Adrenal gland (tissue), 19 donors: ENCODE measurements at regions of chr22 and their contacts with region 1.

Region 1: DNA sequence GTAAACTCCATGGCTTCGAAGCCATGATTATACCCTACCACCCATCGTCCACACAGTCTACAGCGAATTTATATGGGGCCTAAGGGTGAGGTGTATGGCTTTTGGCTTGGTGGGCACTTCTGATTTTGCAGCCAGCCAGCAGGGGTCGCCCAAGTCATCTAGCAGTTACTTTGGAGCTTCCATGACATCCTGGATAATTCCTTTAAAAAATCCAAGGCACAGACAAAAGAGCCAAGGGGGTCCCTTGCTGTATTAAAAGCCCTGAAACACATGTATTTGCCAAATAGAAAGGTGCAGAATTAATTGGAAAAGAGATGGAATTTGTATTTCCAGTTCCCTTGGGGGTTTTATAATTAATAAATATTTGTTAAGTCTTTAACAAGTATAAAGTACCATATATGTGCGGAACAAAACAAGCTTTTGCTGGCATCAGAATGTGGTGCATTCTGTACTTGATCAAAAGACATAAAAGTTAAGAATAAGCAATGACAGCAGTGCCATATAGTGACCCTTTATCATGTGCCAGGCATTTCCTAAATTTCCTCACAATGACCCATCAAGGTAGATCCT is 132.8 kb upstream of the PITPNB start:
- DNase-seq: peak; percentile 50 to 89 (median 74)
- H3K4me3 ChIP-seq: no peak overlapping the region
- H3K27ac ChIP-seq: no peak overlapping the region
- H3K4me1 ChIP-seq: no peaks in the 10 kb centered on the region
- H3K27me3 ChIP-seq: no peaks in the 10 kb centered on the region
- CTCF ChIP-seq: peak; percentile 73 to 87 (median 80)
- POLR2A ChIP-seq: no peak

Region 2: DNA sequence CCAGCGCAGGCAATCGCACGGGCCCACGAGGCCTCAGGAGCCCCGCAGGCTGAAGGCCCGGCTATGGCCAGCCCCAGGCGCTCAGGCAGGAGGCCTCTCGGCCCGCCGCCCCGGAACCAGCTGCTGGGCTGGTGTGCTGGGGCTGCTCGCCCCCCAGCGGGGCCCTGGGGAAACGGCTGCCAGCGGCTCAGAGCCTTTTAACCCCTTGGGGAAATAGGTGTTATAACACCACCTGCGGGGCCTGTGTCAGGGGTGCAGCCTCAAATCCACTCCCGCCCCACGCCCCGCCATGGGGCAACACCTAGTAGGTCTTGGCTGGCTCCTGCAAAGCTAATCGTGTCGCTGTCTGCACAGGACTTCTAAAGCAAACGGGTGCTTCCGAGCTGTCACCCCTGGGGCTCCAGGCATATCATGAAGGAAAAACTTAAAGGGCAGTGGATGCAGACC is 390.4 kb after region 1 on chr22:
- intact Hi-C with region 1: loop called in 1 of 2 experiments (anchors 10 kb)
- DNase-seq: peak; percentile 77 to 88 (median 80)
- H3K4me3 ChIP-seq: peak overlapping the region; percentile 4 to 71 (median 54)
- H3K27ac ChIP-seq: peak overlapping the region; percentile 9 to 84 (median 59)
- H3K4me1 ChIP-seq: peaks cover 17 to 19% of the 10 kb centered on the region in 2 donors
- H3K27me3 ChIP-seq: no peaks in the 10 kb centered on the region
- CTCF ChIP-seq: peak; percentile 54 to 80 (median 71)
- POLR2A ChIP-seq: peak in 1 of 2 donors; percentile 5